A549 (cell line): ENCODE measurements at regions of chr18 and their contacts with region 1.

Region 1: GRCh38 chr18:5295981-5296705 is 617 bp upstream of the ZBTB14 start:
- DNase-seq: peak; percentile 71 to 93
- ATAC-seq: peak; percentile 71 to 84
- H3K4me3 ChIP-seq: peak overlapping the region; percentile 96
- H3K27ac ChIP-seq: peak overlapping the region; percentile 99 to 100
- H3K4me1 ChIP-seq: peaks cover 4% of the 10 kb centered on the region; the same call in 1 of the 3 replicates
- CTCF ChIP-seq: no peak
- EP300 ChIP-seq: no peak
- POLR2A ChIP-seq: peak; percentile 29; the same call in 1 of the 2 replicates
- RAD21 ChIP-seq: no peak

Region 2: GRCh38 chr18:5237723-5238370 is 58.3 kb before region 1 on chr18:
- CTCF ChIA-PET with region 1: interaction called, 4 read pairs
- POLR2A ChIA-PET with region 1: interaction called, 49 read pairs
- DNase-seq: peak; percentile 18 to 89
- ATAC-seq: peak; percentile 99
- H3K4me3 ChIP-seq: peak overlapping the region; percentile 85
- H3K27ac ChIP-seq: peak overlapping the region; percentile 90 to 92
- H3K4me1 ChIP-seq: no peaks in the 10 kb centered on the region
- CTCF ChIP-seq: no peak
- EP300 ChIP-seq: no peak
- POLR2A ChIP-seq: peak; percentile 82
- RAD21 ChIP-seq: no peak